ENCODE measurements at regions of chr5 and their contacts with region 1.

Region 1: DNA sequence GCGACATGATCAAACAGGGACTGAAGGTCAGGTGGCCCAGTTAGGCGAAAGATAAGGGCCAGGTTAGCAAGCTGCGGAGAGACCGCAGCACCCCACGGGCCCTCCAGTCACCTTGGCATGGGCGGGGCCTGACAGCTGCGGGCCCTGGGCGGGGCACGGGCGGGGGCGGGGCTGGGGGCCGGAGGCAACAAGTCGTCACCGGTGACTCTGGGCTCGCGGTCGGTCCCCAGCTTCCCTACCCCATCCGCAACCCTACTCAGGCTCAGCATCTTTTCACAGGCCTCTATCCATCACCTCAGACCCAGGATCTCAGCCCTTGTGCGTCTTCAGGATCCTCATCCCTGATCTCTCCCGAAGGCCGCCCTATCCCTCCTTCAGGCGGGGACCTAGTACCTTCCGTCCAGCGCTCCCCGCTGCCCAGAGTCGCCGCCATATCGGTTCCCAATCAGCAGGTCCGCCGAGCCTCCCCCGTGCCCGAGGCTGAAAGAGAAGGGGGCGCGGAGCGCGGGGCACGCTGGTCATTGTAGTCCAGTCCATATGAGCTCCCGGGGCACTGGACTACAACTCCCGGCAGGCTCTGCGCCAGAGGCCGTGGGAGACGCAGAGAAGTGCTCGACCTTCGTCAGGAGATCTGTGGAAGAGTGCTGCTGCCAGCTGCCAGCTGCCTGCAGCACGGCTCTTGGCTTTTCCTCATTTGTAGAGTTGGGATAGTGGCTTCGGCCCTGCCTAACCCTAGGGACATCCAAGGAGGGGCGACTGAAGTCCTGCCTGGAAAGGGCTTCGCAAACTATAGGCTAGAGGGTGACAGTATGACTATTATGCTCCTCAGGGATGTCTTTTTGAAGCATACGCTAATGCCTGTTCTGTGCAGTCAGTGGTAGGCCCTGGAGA is at the start of gene DNAJC18:
- H3K4me3 ChIP-seq: peak within 1 kb of the TSS; percentile 80
- H3K27ac ChIP-seq: peak within 1 kb of the TSS; percentile 88
- H3K4me1 ChIP-seq: peaks cover 9% of the 10 kb centered on the region
- CTCF ChIP-seq: peak; percentile 38; the same call in 1 of the 2 replicates

Region 2: GRCh38 chr5:139482050-139482889 is 43.0 kb after region 1 on chr5 and contains the start of gene STING1:
- CTCF ChIA-PET with region 1: no interaction called
- POLR2A ChIA-PET with region 1: interaction called, 21 read pairs
- H3K4me3 ChIP-seq: peak within 1 kb of the TSS; percentile 14; the same call in 1 of the 2 replicates
- H3K27ac ChIP-seq: peak within 1 kb of the TSS; percentile 93
- H3K4me1 ChIP-seq: peaks cover 15% of the 10 kb centered on the region
- CTCF ChIP-seq: no peak

Region 3: DNA sequence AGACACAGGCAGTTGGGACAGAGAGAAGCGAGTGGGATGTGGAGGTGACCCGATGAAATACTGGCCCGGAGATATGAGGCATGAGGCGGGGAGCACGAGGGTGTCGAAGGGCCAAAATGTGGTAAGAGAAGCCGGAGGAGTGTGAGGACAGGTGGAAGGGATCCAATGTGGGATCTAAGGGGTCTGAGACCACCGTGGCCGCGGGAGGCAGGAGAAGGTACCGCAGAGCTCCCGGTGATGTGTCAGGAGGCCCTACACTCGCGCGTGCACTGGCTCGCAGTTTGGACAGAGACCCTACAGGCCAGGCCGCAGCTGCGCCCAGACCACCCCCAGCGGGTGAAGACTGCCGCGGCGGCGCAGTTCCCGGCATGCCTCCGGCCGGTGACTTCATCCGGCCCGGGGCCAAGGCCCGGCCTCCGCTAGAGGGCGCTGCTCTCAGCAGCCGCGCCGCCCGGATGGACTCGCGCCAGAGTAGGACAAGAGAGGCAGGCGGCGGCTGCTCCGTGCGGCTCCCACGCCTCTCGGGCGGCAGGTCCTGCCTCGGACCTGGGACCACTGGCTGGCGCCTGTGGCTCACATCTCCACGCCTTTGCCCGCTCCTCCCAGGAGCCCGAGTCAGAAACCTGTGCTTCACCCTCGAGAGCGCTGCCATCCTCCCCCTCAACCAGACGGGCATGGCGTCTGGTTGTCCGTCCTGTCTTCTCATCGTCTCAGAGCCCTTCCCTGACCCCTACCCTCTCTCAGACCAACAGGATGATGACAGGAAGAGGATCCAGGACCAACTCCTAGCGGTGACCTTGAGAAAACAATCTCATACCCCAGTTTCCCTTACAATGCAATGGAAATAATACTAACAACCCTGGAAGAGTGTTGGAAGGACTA is 78.7 kb after region 1 on chr5:
- CTCF ChIA-PET with region 1: interaction called, 28 read pairs
- POLR2A ChIA-PET with region 1: interaction called, 4 read pairs
- H3K4me3 ChIP-seq: peak overlapping the region; percentile 37
- H3K27ac ChIP-seq: peak overlapping the region; percentile 48; the same call in 1 of the 2 replicates
- H3K4me1 ChIP-seq: no peaks in the 10 kb centered on the region
- CTCF ChIP-seq: peak; percentile 100

Region 4: DNA sequence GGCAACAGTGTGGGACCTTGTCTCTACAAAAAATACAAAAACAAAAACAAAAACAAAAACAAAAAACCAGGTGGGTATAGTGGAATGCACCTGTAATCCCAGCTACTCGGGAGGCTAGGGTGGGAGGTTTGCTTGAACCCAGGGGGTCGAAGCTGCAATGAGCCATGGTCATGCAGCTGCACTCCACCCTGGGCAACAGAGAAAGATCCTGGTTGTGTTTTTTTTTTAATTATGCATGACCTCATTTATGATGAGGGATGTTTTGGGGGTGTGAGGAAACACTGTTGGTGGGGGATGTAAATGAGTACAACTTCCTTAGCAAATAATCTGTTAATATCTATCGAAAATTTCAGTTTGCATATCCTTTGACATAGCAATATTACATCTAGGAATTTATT is 92.5 kb after region 1 on chr5:
- CTCF ChIA-PET with region 1: no interaction called
- POLR2A ChIA-PET with region 1: no interaction called
- H3K4me3 ChIP-seq: no peak overlapping the region
- H3K27ac ChIP-seq: no peak overlapping the region
- H3K4me1 ChIP-seq: no peaks in the 10 kb centered on the region
- CTCF ChIP-seq: no peak

Region 5: GRCh38 chr5:139560752-139561654 is 121.7 kb after region 1 on chr5 and contains the start of gene UBE2D2:
- CTCF ChIA-PET with region 1: no interaction called
- POLR2A ChIA-PET with region 1: interaction called, 12 read pairs
- H3K4me3 ChIP-seq: peak within 1 kb of the TSS; percentile 95
- H3K27ac ChIP-seq: peak within 1 kb of the TSS; percentile 96
- H3K4me1 ChIP-seq: peaks cover 10% of the 10 kb centered on the region; the same call in 1 of the 2 replicates
- CTCF ChIP-seq: no peak

Measured in HEK293 (cell line).